Activated naive CD4-positive, alpha-beta T cell treated with anti-CD3 and anti-CD28 coated beads, Interleukin-2, amount 10 ng/mL, durations not matched to agents 7 days and 5 days (primary cell): ENCODE measurements at regions of chr19 and their contacts with region 1.

Region 1: DNA sequence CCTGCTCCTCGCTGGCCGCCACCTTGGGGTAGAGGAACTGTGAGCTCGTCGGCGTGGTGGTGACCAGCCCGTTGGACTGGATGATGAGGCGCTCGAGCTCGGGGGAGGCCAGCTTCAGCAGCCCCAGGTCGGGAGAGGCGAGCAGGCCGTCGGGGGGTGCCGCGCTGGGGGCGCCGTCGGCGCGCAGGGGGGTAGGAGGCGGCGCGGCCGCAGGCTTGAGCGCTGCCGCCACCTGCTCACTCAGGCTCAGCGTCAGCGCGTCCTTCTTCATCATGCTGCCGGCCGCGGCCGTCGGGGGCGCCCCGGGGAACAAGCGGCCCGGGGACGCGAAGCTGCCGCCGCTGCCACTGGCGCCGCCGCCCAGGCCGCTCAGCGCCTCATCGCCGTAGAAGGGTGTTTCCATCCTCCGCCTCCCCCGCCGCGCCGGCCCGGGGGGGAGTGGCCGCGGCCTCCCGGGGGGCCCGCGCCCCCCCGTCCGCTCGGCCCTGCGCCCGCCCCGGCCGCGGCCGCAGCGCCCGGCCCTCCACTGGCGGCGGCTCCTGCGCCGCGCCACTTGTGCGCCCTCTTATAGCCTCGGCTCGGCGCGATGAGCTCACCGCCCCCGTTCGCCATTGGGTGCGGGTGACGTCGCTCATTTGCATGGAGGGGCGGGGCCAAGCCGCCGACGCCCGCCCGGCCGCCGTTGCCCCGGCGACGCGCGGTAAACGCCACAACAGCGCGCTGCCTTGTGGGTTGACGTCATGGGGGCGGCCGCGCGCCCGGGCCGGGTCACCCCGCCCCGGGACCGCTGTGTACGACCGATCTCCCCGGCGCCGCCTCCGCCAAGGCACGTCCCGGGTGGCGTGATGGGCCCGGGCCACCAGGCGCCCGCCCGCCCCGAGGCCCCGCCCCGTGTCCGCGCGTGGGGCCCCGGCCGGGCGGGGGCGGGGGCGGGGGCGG is at the start of gene JUND:
- DNase-seq: peak; percentile 98
- H3K4me3 Mint-ChIP-seq: peak within 1 kb of the TSS; percentile 95
- H3K27ac Mint-ChIP-seq: peak within 1 kb of the TSS; percentile 99
- H3K4me1 Mint-ChIP-seq: peaks cover 60% of the 10 kb centered on the region
- H3K27me3 Mint-ChIP-seq: peaks cover 4% of the 10 kb centered on the region

Region 2: GRCh38 chr19:18269070-18269723 is 12.2 kb before region 1 on chr19:
- CTCF ChIA-PET with region 1: interaction called, 16 read pairs
- DNase-seq: no peak
- H3K4me3 Mint-ChIP-seq: no peak overlapping the region
- H3K27ac Mint-ChIP-seq: no peak overlapping the region
- H3K4me1 Mint-ChIP-seq: peaks cover under 1% of the 10 kb centered on the region
- H3K27me3 Mint-ChIP-seq: no peaks in the 10 kb centered on the region

Region 3: DNA sequence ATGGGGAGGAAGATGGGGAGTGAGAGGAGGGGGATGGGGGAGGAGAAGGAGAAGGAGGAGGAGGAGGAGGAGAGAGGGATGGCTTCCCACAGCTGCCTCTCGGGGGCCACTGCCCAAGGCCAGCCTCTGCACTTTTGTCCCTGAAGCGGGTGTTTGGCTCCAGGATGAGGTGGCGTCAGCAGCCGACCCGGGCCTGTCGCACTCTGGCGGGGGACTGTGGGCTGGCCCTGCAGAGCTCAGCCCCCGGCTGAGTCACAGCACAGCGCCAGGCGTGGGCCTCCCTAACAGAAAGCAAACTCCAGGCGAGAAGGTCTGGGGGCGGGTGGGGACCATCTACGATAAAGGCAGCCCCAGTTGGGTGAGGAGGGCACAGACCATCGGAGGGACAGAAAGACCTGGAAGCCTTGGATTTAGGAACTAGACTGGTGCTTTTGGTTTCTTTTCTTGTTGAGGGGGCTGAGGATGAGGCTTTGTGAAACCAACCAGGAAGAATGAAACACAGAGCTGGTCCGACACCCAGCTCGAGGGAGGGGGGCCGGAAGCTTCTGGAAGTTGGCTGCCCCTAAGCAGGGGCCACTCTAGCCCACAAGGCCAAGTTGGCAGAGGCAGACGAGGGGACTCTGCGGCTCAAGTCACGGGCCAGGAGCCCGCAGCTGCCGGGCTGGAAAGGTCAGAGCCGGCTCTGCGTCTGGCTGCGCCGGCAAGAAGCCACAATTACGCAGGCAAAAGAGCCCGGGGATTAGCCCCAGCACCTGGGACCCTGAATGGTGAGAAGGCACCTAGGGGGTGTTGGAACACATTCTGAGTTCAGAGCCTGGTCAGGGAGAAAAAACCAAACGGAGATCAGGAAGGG is 23.3 kb after region 1 on chr19:
- CTCF ChIA-PET with region 1: interaction called, 132 read pairs
- DNase-seq: peak; percentile 87
- H3K4me3 Mint-ChIP-seq: peak overlapping the region; percentile 94
- H3K27ac Mint-ChIP-seq: peak overlapping the region; percentile 99
- H3K4me1 Mint-ChIP-seq: peaks cover 50% of the 10 kb centered on the region
- H3K27me3 Mint-ChIP-seq: no peaks in the 10 kb centered on the region

Region 4: DNA sequence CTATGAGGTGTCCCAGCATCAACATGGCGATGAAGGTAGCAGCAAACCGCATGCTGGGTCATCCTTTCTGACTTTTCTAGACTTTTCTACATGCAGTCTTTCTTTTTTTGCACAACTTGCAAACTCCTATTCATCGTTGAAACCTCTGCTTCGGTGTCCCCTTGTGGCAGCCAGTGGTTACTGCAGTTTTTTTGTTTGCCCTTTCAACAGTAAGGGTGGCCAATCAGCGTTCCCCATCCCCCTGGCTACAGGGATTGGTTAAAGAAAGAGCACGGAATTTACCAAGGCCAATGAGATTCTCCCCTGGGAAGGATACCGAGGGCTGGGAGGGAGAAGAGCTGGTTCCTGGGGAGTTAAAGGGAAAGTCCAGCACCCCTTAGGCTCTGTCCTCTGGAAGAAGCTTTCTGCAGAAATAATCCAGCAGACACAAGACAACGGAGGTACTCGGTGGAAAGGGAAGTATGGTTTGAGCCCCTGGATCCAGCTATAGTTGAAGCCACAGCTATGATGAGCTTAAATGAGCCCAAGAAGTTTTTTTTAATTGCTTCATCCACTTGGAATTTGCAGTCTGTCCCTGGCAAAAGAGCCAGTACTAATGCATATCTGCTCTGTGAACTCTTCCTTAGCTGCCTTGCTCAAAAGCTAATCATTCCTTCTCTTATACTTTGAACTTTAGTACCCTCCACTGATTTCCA is 47.1 kb after region 1 on chr19:
- CTCF ChIA-PET with region 1: interaction called, 152 read pairs
- DNase-seq: peak; percentile 95
- H3K4me3 Mint-ChIP-seq: peak overlapping the region; percentile 42
- H3K27ac Mint-ChIP-seq: no peak overlapping the region
- H3K4me1 Mint-ChIP-seq: peaks cover 25% of the 10 kb centered on the region
- H3K27me3 Mint-ChIP-seq: peaks cover 27% of the 10 kb centered on the region

Region 5: DNA sequence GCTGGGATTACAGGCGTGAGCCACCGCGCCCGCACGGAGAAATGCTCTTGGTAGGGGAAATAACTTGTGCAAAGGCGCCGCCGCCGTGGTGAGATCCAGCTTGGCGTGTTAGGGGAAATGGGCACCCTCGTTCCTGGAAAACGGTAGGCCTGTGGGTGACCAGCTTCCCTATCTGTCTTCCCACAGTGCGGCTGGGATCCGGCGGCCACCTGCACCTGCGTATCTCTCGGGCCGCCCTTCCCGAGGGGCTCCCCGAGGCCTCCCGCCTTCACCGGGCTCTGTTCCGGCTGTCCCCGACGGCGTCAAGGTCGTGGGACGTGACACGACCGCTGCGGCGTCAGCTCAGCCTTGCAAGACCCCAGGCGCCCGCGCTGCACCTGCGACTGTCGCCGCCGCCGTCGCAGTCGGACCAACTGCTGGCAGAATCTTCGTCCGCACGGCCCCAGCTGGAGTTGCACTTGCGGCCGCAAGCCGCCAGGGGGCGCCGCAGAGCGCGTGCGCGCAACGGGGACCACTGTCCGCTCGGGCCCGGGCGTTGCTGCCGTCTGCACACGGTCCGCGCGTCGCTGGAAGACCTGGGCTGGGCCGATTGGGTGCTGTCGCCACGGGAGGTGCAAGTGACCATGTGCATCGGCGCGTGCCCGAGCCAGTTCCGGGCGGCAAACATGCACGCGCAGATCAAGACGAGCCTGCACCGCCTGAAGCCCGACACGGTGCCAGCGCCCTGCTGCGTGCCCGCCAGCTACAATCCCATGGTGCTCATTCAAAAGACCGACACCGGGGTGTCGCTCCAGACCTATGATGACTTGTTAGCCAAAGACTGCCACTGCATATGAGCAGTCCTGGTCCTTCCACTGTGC is 107.0 kb after region 1 on chr19:
- CTCF ChIA-PET with region 1: interaction called, 14 read pairs
- DNase-seq: peak; percentile 83
- H3K4me3 Mint-ChIP-seq: peak overlapping the region; percentile 55
- H3K27ac Mint-ChIP-seq: no peak overlapping the region
- H3K4me1 Mint-ChIP-seq: peaks cover 25% of the 10 kb centered on the region
- H3K27me3 Mint-ChIP-seq: peaks cover 100% of the 10 kb centered on the region